ENCODE measurements at regions of chr2 and their contacts with region 1.

Region 1: GRCh38 chr2:25991965-25992364 is 9.7 kb upstream of the KIF3C start:
- DNase-seq: no peak
- H3K4me3 Mint-ChIP-seq: no peak overlapping the region
- H3K27ac Mint-ChIP-seq: no peak overlapping the region
- H3K4me1 Mint-ChIP-seq: peaks cover 2% of the 10 kb centered on the region
- H3K27me3 Mint-ChIP-seq: no peaks in the 10 kb centered on the region

Region 2: GRCh38 chr2:25951071-25951547 is 40.9 kb before region 1 on chr2:
- CTCF ChIA-PET with region 1: interaction called, 13 read pairs
- POLR2A ChIA-PET with region 1: no interaction called
- intact Hi-C with region 1: loop called (anchors 1 kb)
- DNase-seq: peak; percentile 81
- H3K4me3 Mint-ChIP-seq: no peak overlapping the region
- H3K27ac Mint-ChIP-seq: no peak overlapping the region
- H3K4me1 Mint-ChIP-seq: no peaks in the 10 kb centered on the region
- H3K27me3 Mint-ChIP-seq: no peaks in the 10 kb centered on the region

Region 3: DNA sequence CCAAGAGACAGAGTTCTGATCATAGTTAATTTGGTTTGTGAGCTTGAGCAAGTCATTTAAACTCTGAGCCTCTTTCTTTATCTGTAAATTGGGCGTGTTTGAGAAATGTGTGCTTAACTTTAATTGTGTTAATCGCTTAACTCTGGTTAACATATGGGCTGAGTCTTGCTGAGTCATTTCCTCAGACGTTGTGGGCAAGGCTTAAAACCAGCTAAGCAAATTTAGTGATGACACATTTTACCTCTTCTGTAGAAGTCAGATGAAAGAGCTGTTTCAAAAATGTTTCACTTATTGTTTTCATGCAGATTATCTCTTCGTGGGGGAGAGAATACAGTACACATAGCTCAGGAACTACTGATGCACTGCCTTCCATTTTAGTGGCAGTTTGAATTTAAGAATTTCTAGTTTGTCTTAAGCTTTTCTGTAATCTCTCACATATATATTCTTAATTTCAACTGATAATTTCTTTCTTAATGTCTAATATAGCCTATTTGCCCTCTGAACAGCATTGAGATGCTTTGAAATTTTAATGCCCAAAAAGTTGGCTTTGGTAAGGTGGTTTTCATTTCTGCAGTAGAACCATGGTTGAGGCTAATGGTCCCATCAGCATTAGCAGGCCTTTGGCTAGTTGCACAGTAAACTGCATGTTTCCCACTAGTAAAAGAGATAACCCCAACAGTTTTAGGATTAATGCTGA is 76.8 kb after region 1 on chr2:
- CTCF ChIA-PET with region 1: interaction called, 10 read pairs
- POLR2A ChIA-PET with region 1: interaction called, 3 read pairs
- intact Hi-C with region 1: no loop called
- DNase-seq: peak; percentile 76
- H3K4me3 Mint-ChIP-seq: peak overlapping the region; percentile 69
- H3K27ac Mint-ChIP-seq: peak overlapping the region; percentile 96
- H3K4me1 Mint-ChIP-seq: peaks cover 57% of the 10 kb centered on the region
- H3K27me3 Mint-ChIP-seq: no peaks in the 10 kb centered on the region

Region 4: GRCh38 chr2:26144953-26145680 is 153.2 kb after region 1 on chr2:
- CTCF ChIA-PET with region 1: interaction called, 90 read pairs
- POLR2A ChIA-PET with region 1: no interaction called
- intact Hi-C with region 1: loop called (anchors 1 kb)
- DNase-seq: peak; percentile 78
- H3K4me3 Mint-ChIP-seq: no peak overlapping the region
- H3K27ac Mint-ChIP-seq: no peak overlapping the region
- H3K4me1 Mint-ChIP-seq: peaks cover 2% of the 10 kb centered on the region
- H3K27me3 Mint-ChIP-seq: peaks cover 13% of the 10 kb centered on the region

Region 5: GRCh38 chr2:26184555-26185303 is 192.8 kb after region 1 on chr2:
- CTCF ChIA-PET with region 1: interaction called, 11 read pairs
- POLR2A ChIA-PET with region 1: no interaction called
- intact Hi-C with region 1: no loop called
- DNase-seq: peak; percentile 89
- H3K4me3 Mint-ChIP-seq: peak overlapping the region; percentile 72
- H3K27ac Mint-ChIP-seq: no peak overlapping the region
- H3K4me1 Mint-ChIP-seq: peaks cover 14% of the 10 kb centered on the region
- H3K27me3 Mint-ChIP-seq: peaks cover 13% of the 10 kb centered on the region

Measured in activated CD4-positive, alpha-beta memory T cell treated with anti-CD3 and anti-CD28 coated beads for 36 hours (primary cell).